ENCODE measurements at regions of chr9 and their contacts with region 1.

Region 1: DNA sequence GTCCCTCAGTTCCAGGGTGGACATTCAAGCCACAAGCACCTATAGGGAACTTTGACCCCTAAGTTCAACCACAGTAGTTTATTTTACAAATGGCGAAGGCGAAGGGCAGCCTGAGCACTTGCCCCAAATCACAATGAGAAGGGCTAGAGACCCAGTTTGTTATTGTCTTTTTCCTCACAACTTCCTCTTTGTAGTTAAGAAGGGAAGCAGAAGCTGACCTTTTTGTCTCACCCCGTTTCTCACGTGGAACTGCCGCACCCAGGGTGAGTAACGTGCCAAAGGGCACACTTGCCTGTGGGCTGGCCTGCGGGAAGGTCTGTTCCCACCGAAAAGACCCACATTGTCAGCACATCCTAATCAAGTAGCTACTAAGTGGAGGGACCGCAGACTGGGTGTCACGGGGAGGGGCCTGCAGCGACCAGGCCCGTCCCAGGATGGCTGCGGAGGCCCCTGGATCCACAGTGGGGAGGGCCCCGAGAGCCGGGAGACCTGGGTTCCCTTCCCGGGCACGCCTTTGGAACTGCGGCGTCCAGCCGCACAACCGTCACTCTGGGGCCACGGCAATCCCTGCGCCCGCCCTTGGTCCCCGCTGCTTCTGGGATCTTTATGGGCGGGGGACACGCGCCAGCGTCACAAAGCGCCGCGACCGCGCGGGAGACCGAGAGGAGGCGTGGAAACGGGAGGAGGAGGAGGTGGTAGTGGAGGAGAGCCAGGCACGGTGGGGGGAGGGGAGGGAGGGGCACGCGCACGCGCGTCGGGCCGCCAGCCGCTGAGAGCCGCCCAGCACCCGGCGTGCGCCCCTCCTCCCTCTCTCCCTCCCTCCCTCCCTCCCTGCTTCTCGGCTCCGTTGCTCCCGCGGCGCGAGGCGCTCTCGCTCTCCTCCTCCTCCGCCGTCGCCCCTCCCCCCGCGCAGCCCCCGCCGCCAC is at the start of gene UBE2R2:
- DNase-seq: peak; percentile 85
- ATAC-seq: peak; percentile 71
- H3K4me3 ChIP-seq: peak within 1 kb of the TSS; percentile 95
- H3K27ac ChIP-seq: peak within 1 kb of the TSS; percentile 95
- H3K4me1 ChIP-seq: peaks cover 11% of the 10 kb centered on the region
- H3K27me3 ChIP-seq: no peaks in the 10 kb centered on the region
- CTCF ChIP-seq: no peak
- EP300 ChIP-seq: 0 out of 4 replicates have a peak, but pooled peaks of 1 of the 2 experiments have one; percentile 42
- POLR2A ChIP-seq: peak; percentile 86
- RAD21 ChIP-seq: no peak
- polyA plus RNA-seq, gene UBE2R2: 11.4 to 17.2 TPM

Region 2: GRCh38 chr9:33659921-33660320 is 156.7 kb before region 1 on chr9:
- CTCF ChIA-PET with region 1: no interaction called
- POLR2A ChIA-PET with region 1: no interaction called
- RAD21 ChIA-PET with region 1: no interaction called
- SMC1A ChIA-PET with region 1: no interaction called
- in situ Hi-C with region 1: no loop called
- intact Hi-C with region 1: no loop called
- DNase-seq: no peak
- ATAC-seq: no peak
- H3K4me3 ChIP-seq: no peak overlapping the region
- H3K27ac ChIP-seq: no peak overlapping the region
- H3K4me1 ChIP-seq: no peaks in the 10 kb centered on the region
- H3K27me3 ChIP-seq: peaks cover 0 to 4% of the 10 kb centered on the region in 2 experiments; a peak in 2 of 4 replicates
- CTCF ChIP-seq: no peak
- EP300 ChIP-seq: no peak
- POLR2A ChIP-seq: no peak
- RAD21 ChIP-seq: no peak

Region 3: DNA sequence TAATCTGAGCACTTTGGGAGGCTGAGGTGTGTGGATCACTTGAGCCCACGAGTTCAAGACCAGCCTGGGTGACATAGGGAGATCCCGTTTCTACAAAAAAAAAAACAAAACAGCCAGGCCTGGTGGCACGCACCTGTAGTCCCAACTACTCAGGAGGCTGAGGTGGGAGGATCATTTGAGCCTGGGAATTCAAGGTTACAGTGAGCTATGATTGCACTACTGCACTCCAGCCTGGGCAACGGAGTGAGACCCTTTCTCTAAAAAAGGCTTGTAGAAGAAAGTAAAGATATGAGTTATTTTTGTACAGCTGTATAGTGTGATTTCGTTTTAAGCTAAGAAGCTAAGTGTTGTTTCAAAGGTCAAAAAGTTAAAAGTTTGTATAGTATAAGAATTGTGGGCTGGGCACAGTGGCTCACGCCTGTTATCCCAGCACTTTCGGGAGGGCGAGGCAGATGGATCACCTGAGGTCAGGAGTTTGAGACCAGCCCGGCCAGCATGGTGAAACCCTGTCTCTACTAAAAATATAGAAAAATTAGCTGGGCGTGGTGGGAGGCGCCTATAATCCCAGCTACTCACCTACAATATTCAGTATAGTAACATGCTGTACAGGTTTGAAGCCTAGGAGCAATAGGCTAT is 19.2 kb after region 1 on chr9:
- CTCF ChIA-PET with region 1: interaction called, 43 read pairs
- POLR2A ChIA-PET with region 1: interaction called, 7 read pairs
- RAD21 ChIA-PET with region 1: interaction called, 12 read pairs
- SMC1A ChIA-PET with region 1: interaction called, 38 read pairs
- in situ Hi-C with region 1: no loop called
- intact Hi-C with region 1: no loop called
- DNase-seq: no peak
- ATAC-seq: peak; percentile 35
- H3K4me3 ChIP-seq: no peak overlapping the region; the same call in 1 of the 2 replicates
- H3K27ac ChIP-seq: no peak overlapping the region; the same call in 1 of the 2 replicates
- H3K4me1 ChIP-seq: peaks cover 11% of the 10 kb centered on the region
- H3K27me3 ChIP-seq: no peaks in the 10 kb centered on the region
- CTCF ChIP-seq: no peak
- EP300 ChIP-seq: no peak
- POLR2A ChIP-seq: no peak
- RAD21 ChIP-seq: no peak

Region 4: GRCh38 chr9:33858346-33858885 is 41.8 kb after region 1 on chr9:
- CTCF ChIA-PET with region 1: interaction called, 128 read pairs
- POLR2A ChIA-PET with region 1: interaction called, 3 read pairs
- RAD21 ChIA-PET with region 1: interaction called, 5 read pairs
- SMC1A ChIA-PET with region 1: interaction called, 77 read pairs
- in situ Hi-C with region 1: no loop called
- intact Hi-C with region 1: no loop called
- DNase-seq: no peak
- ATAC-seq: no peak
- H3K4me3 ChIP-seq: no peak overlapping the region
- H3K27ac ChIP-seq: no peak overlapping the region
- H3K4me1 ChIP-seq: no peaks in the 10 kb centered on the region; the same call in 1 of the 2 replicates
- H3K27me3 ChIP-seq: no peaks in the 10 kb centered on the region
- CTCF ChIP-seq: no peak
- EP300 ChIP-seq: no peak
- POLR2A ChIP-seq: no peak
- RAD21 ChIP-seq: no peak

Region 5: GRCh38 chr9:33924978-33925797 is 108.6 kb after region 1 on chr9:
- CTCF ChIA-PET with region 1: interaction called, 28 read pairs
- POLR2A ChIA-PET with region 1: no interaction called
- RAD21 ChIA-PET with region 1: interaction called, 8 read pairs
- SMC1A ChIA-PET with region 1: interaction called, 9 read pairs
- in situ Hi-C with region 1: no loop called
- intact Hi-C with region 1: no loop called
- DNase-seq: no peak
- ATAC-seq: peak; percentile 60
- H3K4me3 ChIP-seq: no peak overlapping the region
- H3K27ac ChIP-seq: no peak overlapping the region
- H3K4me1 ChIP-seq: no peaks in the 10 kb centered on the region
- H3K27me3 ChIP-seq: no peaks in the 10 kb centered on the region
- CTCF ChIP-seq: peak; percentile 38 to 57 (median 47); a peak in 5 of 6 replicates
- EP300 ChIP-seq: no peak
- POLR2A ChIP-seq: peak; percentile 31; the same call in 1 of the 2 replicates
- RAD21 ChIP-seq: peak; percentile 41